CD14-positive monocyte (primary cell): ENCODE measurements at regions of chr6 and their contacts with region 1.

Region 1: GRCh38 chr6:20173833-20174792 is 38.2 kb downstream of the MBOAT1 start:
- DNase-seq: peak; percentile 65 to 76 (median 76)
- H3K4me3 ChIP-seq: peak overlapping the region; percentile 7 to 70 (median 43)
- H3K4me3 Mint-ChIP-seq: peak overlapping the region; percentile 72 to 89
- H3K27ac ChIP-seq: peak overlapping the region; percentile 94 to 98
- H3K27ac Mint-ChIP-seq: peak overlapping the region; percentile 97 to 99 (median 98)
- H3K4me1 ChIP-seq: peaks cover 71% of the 10 kb centered on the region in 2 donors
- H3K4me1 Mint-ChIP-seq: peaks cover 64% of the 10 kb centered on the region
- H3K27me3 ChIP-seq: no peaks in the 10 kb centered on the region
- H3K27me3 Mint-ChIP-seq: no peaks in the 10 kb centered on the region
- CTCF ChIP-seq: no peak

Region 2: DNA sequence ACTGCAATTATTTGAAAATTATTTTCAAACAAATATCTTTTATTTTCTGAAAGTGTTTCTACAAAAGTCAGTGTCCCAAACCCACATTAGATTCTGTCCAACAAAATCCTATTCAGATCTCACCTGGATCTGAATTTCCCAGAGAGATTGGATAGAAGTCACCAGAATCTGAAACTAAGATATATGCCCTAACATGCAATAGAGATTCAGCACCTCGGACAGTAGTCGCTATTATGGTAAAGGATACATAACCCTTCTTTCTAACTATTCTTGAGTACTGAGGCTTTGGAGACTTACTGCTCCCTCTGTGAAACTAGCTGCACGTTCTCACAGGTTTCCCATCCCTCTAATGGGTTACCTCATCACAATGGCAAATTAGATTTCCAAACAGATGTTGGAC is 185.6 kb before region 1 on chr6:
- intact Hi-C with region 1: no loop called
- DNase-seq: no peak
- H3K4me3 ChIP-seq: no peak overlapping the region
- H3K4me3 Mint-ChIP-seq: no peak overlapping the region
- H3K27ac ChIP-seq: no peak overlapping the region
- H3K27ac Mint-ChIP-seq: no peak overlapping the region
- H3K4me1 ChIP-seq: no peaks in the 10 kb centered on the region
- H3K4me1 Mint-ChIP-seq: no peaks in the 10 kb centered on the region
- H3K27me3 ChIP-seq: no peaks in the 10 kb centered on the region
- H3K27me3 Mint-ChIP-seq: peaks cover 0 to 2% (median 0%) of the 10 kb centered on the region in 3 donors
- CTCF ChIP-seq: no peak

Region 3: GRCh38 chr6:20085817-20086216 is 88.3 kb before region 1 on chr6:
- intact Hi-C with region 1: no loop called
- DNase-seq: no peak
- H3K4me3 ChIP-seq: no peak overlapping the region
- H3K4me3 Mint-ChIP-seq: no peak overlapping the region
- H3K27ac ChIP-seq: no peak overlapping the region
- H3K27ac Mint-ChIP-seq: no peak overlapping the region
- H3K4me1 ChIP-seq: no peaks in the 10 kb centered on the region
- H3K4me1 Mint-ChIP-seq: no peaks in the 10 kb centered on the region
- H3K27me3 ChIP-seq: no peaks in the 10 kb centered on the region
- H3K27me3 Mint-ChIP-seq: peaks cover 0 to 2% (median 0%) of the 10 kb centered on the region in 3 donors
- CTCF ChIP-seq: no peak

Region 4: GRCh38 chr6:20202324-20202658 is 28.2 kb after region 1 on chr6:
- intact Hi-C with region 1: loop called in 1 of 2 experiments (anchors 5 kb)
- DNase-seq: no peak
- H3K4me3 ChIP-seq: no peak overlapping the region
- H3K4me3 Mint-ChIP-seq: no peak overlapping the region
- H3K27ac ChIP-seq: peak overlapping the region in 1 of 2 donors; percentile 73
- H3K27ac Mint-ChIP-seq: peak overlapping the region; percentile 33 to 90 (median 80)
- H3K4me1 ChIP-seq: peaks cover 63 to 76% of the 10 kb centered on the region in 2 donors
- H3K4me1 Mint-ChIP-seq: peaks cover 77% of the 10 kb centered on the region
- H3K27me3 ChIP-seq: no peaks in the 10 kb centered on the region
- H3K27me3 Mint-ChIP-seq: peaks cover 0 to 1% (median 1%) of the 10 kb centered on the region in 3 donors
- CTCF ChIP-seq: no peak

Region 5: DNA sequence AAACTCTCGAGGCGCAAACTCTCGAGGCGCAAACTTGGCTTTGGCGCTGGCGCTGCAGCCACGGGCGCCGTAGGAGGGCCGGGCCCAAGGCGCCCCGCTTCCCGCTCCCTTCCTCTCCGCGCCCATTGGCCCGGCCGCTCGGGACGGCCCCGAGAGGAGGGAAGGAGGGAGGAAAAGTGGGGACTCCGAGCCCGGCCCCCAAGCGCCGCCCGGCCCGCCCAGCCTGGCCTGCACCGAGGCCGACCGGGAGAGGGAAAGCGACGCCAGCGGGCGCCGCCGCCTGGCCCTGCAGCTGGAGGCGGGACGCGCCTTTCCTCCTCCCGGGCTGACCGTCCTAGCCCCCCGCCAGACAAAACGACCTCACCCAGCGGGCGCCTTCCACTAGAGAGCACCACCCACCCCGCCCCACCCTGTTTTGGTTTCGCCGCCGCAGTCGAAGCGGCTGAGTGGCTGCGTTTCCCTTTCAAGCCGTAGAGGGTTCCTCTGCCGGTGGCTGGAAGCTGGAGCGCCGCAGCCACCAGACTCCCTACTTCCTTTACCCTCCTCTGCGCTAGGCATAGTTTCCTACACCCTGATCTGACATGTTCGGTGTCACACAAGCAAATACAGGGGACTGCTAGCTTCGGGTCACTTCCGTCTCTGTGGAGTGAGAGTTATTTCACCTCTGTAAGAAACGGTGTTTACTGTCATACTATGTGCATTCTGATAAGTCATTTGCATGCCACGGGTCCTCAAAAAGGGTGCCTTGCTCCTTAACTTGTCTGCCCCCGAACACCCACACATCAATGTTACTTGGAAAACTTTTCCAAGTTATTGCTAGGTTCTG is 38.5 kb after region 1 on chr6 and contains the start of gene MBOAT1:
- intact Hi-C with region 1: loop called (anchors 5 kb)
- DNase-seq: peak; percentile 66 to 76 (median 73)
- H3K4me3 ChIP-seq: peak within 1 kb of the TSS; percentile 77 to 94 (median 92)
- H3K4me3 Mint-ChIP-seq: peak within 1 kb of the TSS; percentile 92 to 98
- H3K27ac ChIP-seq: peak within 1 kb of the TSS; percentile 88 to 89
- H3K27ac Mint-ChIP-seq: peak within 1 kb of the TSS; percentile 93 to 98 (median 97)
- H3K4me1 ChIP-seq: peaks cover 36 to 55% of the 10 kb centered on the region in 2 donors
- H3K4me1 Mint-ChIP-seq: peaks cover 61% of the 10 kb centered on the region
- H3K27me3 ChIP-seq: no peaks in the 10 kb centered on the region
- H3K27me3 Mint-ChIP-seq: no peaks in the 10 kb centered on the region
- CTCF ChIP-seq: no peak
- polyA plus RNA-seq, gene MBOAT1: 6.8 to 59.1 (median 8.1) TPM